Activated T-helper 2 cell treated with anti-CD3 and anti-CD28 coated beads, Interferon-gamma antibody, Interleukin-2, Interleukin-4, amounts not matched to agents 10 μg/mL and 5 μg/mL and 100 μg/mL, durations not matched to agents 14 hours and 24 hours and 36 hours (primary cell): ENCODE measurements at regions of chr2 and their contacts with region 1.

Region 1: GRCh38 chr2:103605071-103605780 is 843.4 kb downstream of the TMEM182 start:
- DNase-seq: no peak
- H3K4me3 Mint-ChIP-seq: no peak overlapping the region
- H3K27ac Mint-ChIP-seq: no peak overlapping the region
- H3K4me1 Mint-ChIP-seq: no peaks in the 10 kb centered on the region
- H3K27me3 Mint-ChIP-seq: no peaks in the 10 kb centered on the region

Region 2: DNA sequence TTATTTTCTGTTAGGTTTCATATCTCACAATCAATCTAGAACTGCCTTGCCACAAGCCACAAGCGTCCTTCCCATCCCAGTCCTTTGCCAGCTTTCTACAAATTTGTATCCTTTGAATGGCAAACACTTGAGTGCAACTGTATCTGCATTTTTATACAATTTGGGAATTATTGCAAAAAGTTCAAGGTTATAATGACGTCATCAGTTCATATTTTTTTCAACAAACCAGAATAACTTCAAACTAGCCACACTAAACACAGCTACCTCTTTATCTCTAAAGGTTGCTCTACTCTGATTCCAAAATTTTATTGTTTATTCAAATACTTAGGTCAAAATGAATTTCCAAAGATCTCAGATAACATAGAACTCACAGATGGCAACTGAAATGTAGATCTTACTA is 33.8 kb after region 1 on chr2:
- intact Hi-C with region 1: loop called (anchors 2 kb)
- DNase-seq: no peak
- H3K4me3 Mint-ChIP-seq: no peak overlapping the region
- H3K27ac Mint-ChIP-seq: no peak overlapping the region
- H3K4me1 Mint-ChIP-seq: no peaks in the 10 kb centered on the region
- H3K27me3 Mint-ChIP-seq: no peaks in the 10 kb centered on the region